HEK293 (cell line): ENCODE measurements at regions of chr22 and their contacts with region 1.

Region 1: GRCh38 chr22:19730655-19731360 is 7.5 kb downstream of the GP1BB start:
- H3K4me3 ChIP-seq: peak overlapping the region; percentile 38
- H3K27ac ChIP-seq: no peak overlapping the region
- H3K4me1 ChIP-seq: no peaks in the 10 kb centered on the region
- CTCF ChIP-seq: peak; percentile 99

Region 2: GRCh38 chr22:19750507-19751490 is 20.0 kb after region 1 on chr22:
- CTCF ChIA-PET with region 1: interaction called, 42 read pairs
- POLR2A ChIA-PET with region 1: interaction called, 6 read pairs
- H3K4me3 ChIP-seq: no peak overlapping the region
- H3K27ac ChIP-seq: no peak overlapping the region
- H3K4me1 ChIP-seq: no peaks in the 10 kb centered on the region
- CTCF ChIP-seq: no peak

Region 3: GRCh38 chr22:19779685-19780268 is 49.0 kb after region 1 on chr22:
- CTCF ChIA-PET with region 1: interaction called, 12 read pairs
- POLR2A ChIA-PET with region 1: no interaction called
- H3K4me3 ChIP-seq: no peak overlapping the region
- H3K27ac ChIP-seq: no peak overlapping the region
- H3K4me1 ChIP-seq: no peaks in the 10 kb centered on the region
- CTCF ChIP-seq: no peak

Region 4: DNA sequence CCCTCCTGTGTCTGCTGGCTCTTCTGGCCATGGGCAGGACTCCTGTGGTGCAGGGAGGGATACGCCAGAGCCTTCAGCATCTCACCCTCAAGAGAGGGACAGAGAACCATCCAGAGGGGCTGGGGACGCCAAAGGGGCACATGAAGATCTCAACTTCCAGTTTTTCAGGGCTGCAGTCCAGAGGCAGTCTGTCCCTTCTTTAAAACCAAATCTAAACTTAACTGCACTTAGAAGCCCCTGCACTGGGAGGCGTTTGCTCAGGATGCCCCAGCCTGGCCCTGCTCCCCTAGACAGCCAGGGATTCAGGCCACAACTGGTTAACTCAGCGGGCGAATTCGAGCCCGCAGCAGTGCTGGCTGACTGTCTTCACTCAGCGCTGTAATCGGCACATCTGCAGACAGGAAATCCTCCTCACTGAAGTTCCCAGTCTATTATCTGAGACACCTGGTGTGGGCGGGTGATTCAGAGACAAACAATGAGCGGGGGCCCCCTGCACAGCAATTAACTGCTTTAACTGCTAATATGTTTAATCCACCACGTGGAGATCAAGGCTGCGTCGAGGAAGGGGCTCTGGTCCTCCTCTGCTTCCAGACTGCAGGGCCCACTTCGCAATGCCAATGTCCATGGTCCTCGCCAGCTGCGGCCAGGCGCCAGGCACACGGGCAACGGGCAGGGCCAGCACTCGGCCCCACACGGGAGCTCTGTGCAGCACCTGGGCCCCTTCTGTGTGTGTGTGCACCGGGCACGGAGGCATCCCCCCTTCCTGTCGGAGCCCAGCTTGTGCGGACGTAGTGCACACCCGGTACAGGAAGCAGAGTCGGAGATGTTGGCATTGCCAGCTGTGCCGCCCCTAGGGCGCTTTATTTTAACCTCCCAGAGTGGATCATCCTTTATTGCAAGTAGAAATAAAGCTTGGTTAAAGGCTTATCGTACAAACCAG is 160.8 kb after region 1 on chr22:
- CTCF ChIA-PET with region 1: interaction called, 11 read pairs
- POLR2A ChIA-PET with region 1: no interaction called
- H3K4me3 ChIP-seq: no peak overlapping the region
- H3K27ac ChIP-seq: peak overlapping the region; percentile 13; the same call in 1 of the 2 replicates
- H3K4me1 ChIP-seq: peaks cover 7% of the 10 kb centered on the region
- CTCF ChIP-seq: no peak

Region 5: DNA sequence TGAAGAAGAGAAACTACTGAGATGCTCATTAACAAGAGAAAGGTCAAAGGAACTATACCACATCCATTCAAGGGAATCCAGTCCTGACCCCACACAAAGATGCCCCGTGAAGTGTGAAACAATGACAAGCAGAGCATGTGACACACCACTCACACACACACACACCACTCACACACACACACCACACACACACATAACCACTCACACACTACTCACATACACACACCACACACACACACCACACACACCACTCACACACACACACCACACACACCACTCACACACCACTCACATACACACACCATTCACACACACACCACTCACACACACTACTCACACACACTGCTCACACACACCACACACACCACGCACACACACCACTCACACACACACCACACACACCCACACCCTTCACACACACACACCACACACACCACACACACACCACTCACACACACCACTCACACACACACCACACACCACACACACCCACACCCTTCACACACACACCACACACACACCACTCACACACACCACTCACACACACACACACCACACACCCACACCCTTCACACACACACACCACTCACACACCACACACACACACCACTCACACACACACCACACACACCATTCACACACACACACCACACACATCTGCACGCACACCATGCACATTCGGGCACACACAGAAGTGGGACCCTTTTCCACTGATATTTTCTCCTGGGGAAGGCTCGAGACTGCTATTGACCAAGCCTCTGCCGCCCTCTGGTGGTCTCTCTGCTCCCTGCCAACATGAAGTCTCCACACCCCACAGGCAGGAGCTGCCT is 178.8 kb after region 1 on chr22:
- CTCF ChIA-PET with region 1: interaction called, 184 read pairs
- POLR2A ChIA-PET with region 1: interaction called, 5 read pairs
- H3K4me3 ChIP-seq: no peak overlapping the region
- H3K27ac ChIP-seq: no peak overlapping the region
- H3K4me1 ChIP-seq: no peaks in the 10 kb centered on the region
- CTCF ChIP-seq: peak; percentile 94

Region 6: GRCh38 chr22:19959043-19959586 is 228.3 kb after region 1 on chr22:
- CTCF ChIA-PET with region 1: interaction called, 13 read pairs
- POLR2A ChIA-PET with region 1: interaction called, 4 read pairs
- H3K4me3 ChIP-seq: peak overlapping the region; percentile 33
- H3K27ac ChIP-seq: no peak overlapping the region
- H3K4me1 ChIP-seq: peaks cover 6% of the 10 kb centered on the region; the same call in 1 of the 2 replicates
- CTCF ChIP-seq: no peak